PC-9 (cell line): ENCODE measurements at regions of chr11 and their contacts with region 1.

Region 1: GRCh38 chr11:9341638-9342137 is 27.3 kb upstream of the TMEM41B start:
- DNase-seq: peak in 1 of 2 experiments; percentile 46
- H3K4me3 ChIP-seq: no peak overlapping the region
- H3K27ac ChIP-seq: peak overlapping the region; percentile 39
- H3K4me1 ChIP-seq: peaks cover 9% of the 10 kb centered on the region; the same call in 1 of the 2 replicates
- H3K27me3 ChIP-seq: no peaks in the 10 kb centered on the region
- CTCF ChIP-seq: no peak

Region 2: GRCh38 chr11:9330387-9331384 is 11.0 kb before region 1 on chr11:
- CTCF ChIA-PET with region 1: interaction called, 16 read pairs
- POLR2A ChIA-PET with region 1: no interaction called
- intact Hi-C with region 1: no loop called
- DNase-seq: peak; percentile 74 to 90
- H3K4me3 ChIP-seq: no peak overlapping the region; the same call in 1 of the 2 replicates
- H3K27ac ChIP-seq: peak overlapping the region; percentile 93
- H3K4me1 ChIP-seq: peaks cover 28% of the 10 kb centered on the region
- H3K27me3 ChIP-seq: no peaks in the 10 kb centered on the region
- CTCF ChIP-seq: no peak